ENCODE measurements at regions of chr15 and their contacts with region 1.

Region 1: DNA sequence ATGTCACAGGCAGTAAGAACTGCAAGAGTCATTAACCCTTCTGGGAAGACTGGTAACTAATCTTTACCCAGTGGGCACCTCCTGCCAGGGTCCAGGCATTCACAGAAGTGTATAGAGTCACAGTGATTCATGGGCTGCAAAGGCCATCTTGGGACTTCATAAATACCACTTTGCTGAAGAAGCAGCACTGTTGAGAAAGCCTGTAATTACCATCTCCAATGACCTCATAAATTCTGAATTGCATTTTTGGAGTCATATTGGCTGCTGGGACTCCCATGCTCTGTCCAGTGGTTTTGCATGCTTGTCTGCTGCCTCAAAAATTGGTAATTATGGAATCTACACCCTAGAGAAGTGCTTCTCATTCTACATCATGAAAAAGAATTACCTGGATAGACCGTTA is 837.2 kb downstream of the NTRK3 start:
- DNase-seq: no peak
- H3K4me3 ChIP-seq: no peak overlapping the region
- H3K27ac ChIP-seq: no peak overlapping the region
- H3K4me1 ChIP-seq: no peaks in the 10 kb centered on the region
- H3K27me3 ChIP-seq: no peaks in the 10 kb centered on the region
- CTCF ChIP-seq: no peak
- POLR2A ChIP-seq: no peak

Region 2: DNA sequence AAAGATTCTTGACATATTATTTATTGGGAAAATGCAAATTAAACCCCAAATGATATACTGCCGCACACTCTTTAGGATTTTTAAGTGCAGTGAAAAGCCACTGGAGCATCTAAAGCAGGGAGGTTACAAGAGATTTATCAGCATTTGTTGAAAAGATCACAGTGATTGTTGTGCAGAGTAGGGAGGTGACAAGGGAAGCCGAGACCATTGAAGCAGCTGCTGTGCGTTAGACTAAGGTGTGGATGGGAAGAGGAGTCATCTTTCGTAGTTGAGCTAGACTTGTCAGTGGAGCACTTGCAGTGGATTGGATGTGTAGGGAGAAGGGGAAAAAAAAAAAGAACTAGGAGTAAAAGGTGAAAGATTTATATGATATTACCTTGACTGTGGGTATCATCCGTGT is 17.4 kb before region 1 on chr15:
- intact Hi-C with region 1: no loop called
- DNase-seq: no peak
- H3K4me3 ChIP-seq: no peak overlapping the region
- H3K27ac ChIP-seq: no peak overlapping the region
- H3K4me1 ChIP-seq: no peaks in the 10 kb centered on the region
- H3K27me3 ChIP-seq: no peaks in the 10 kb centered on the region
- CTCF ChIP-seq: no peak
- POLR2A ChIP-seq: no peak

Region 3: DNA sequence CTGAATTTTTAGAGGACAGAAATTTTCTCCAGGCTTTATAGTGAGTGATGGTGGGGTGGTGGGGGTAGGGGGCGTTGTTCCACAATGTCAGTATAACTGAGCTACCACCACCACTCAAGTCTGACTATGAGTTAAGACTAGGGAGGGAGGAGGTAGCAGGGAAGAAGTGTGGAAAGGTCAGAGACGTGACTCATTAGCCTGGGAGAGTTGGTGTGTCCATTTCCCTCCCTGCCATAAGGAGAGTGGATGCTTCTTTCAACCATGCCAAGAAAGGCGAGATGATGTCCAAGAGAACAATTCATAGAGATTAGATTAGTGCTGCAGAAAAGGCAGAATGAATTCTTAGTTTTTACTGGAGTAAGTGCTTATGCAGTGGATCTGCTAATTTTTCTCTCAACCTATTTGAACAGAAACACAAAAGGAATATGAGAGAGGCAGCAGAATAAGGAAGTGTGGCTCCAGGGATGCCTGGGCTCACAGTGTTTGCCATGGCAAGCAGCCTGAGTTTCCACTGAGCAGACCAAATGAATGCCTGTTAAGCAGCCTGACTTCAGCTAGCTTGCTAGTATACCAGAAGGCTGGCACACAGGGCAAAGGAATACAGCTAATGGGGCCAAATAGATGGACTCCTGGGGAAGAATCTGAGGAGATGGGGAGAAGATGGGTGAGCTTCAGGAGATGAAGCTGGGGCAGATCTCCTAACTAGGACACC is 128.3 kb after region 1 on chr15:
- intact Hi-C with region 1: loop called (anchors 5 kb)
- DNase-seq: no peak
- H3K4me3 ChIP-seq: no peak overlapping the region
- H3K27ac ChIP-seq: no peak overlapping the region
- H3K4me1 ChIP-seq: no peaks in the 10 kb centered on the region
- H3K27me3 ChIP-seq: no peaks in the 10 kb centered on the region
- CTCF ChIP-seq: no peak
- POLR2A ChIP-seq: no peak

Region 4: DNA sequence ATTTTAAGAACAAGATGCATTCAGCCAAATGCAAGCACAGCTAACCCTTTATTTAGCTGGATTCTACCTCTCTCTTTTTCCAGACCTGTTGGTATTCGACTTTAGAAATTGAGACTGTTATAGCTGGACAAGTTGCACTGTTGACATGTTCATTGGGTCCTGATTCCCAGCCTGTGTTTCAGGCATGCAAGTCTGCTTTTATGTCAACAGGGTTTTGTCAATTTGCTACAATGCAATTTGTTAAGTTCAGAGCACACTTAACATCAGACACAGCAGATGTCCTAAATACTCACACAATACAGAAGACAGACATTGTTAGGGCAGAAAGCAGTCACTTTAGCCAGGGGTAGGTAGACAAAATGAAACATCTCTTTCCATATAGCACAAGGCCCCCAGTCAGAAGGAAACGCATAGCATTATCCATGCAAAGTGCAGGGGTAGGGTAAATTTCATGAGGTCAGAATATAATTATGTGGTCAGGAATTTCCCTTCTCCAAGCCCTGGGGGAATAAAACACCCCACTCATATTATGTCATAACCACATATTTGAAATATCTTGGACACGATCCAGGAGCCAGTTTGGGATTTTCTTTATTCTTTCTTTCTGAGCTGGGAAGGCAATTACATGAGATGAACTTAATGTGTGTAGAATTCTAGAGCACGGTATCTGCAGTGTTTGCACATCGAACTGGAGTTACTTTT is 333.1 kb after region 1 on chr15:
- intact Hi-C with region 1: no loop called
- DNase-seq: no peak
- H3K4me3 ChIP-seq: no peak overlapping the region
- H3K27ac ChIP-seq: no peak overlapping the region
- H3K4me1 ChIP-seq: no peaks in the 10 kb centered on the region
- H3K27me3 ChIP-seq: no peaks in the 10 kb centered on the region
- CTCF ChIP-seq: no peak
- POLR2A ChIP-seq: no peak

Measured in breast epithelium (tissue), 4 donors.